Activated naive CD4-positive, alpha-beta T cell treated with anti-CD3 and anti-CD28 coated beads for 36 hours (primary cell): ENCODE measurements at regions of chr13 and their contacts with region 1.

Region 1: DNA sequence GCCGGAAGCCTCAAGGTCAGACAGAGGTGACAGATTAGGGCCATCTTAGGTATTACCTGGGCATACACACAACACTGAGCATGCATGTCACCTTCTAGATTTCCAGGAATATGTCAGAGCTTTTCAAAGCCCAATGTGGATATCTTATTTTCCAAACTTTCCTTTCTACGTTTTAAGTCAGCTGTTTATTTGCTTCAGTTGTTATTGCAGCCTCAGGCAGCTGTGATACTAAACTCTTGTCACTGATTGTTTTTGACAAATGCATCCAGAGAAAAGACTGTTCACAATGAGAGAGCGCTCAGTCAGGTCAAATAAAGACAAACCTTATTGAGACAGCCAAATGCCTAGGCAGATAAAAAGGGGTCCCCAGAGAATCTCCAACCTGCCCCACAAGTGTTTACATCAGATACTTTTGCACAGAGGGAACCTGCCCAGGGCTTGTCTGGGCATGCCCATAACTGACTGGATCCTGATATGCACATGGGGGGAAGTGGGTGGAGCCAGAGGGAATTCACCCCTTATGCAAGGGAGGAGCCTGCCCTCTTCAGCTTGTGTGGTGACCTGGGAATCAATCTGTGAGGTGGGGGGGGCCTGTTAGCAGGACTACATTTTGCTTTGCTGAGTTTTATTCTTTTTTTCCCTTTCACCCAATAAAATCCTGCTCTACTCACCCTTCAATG is 28.5 kb downstream of the MED4 start:
- DNase-seq: peak; percentile 90
- H3K4me3 Mint-ChIP-seq: no peak overlapping the region
- H3K27ac Mint-ChIP-seq: peak overlapping the region; percentile 91
- H3K4me1 Mint-ChIP-seq: peaks cover 13% of the 10 kb centered on the region
- H3K27me3 Mint-ChIP-seq: no peaks in the 10 kb centered on the region

Region 2: GRCh38 chr13:47890146-47890814 is 176.2 kb before region 1 on chr13:
- CTCF ChIA-PET with region 1: no interaction called
- intact Hi-C with region 1: loop called (anchors 1 kb)
- DNase-seq: peak; percentile 55
- H3K4me3 Mint-ChIP-seq: peak overlapping the region; percentile 70
- H3K27ac Mint-ChIP-seq: peak overlapping the region; percentile 80
- H3K4me1 Mint-ChIP-seq: peaks cover 15% of the 10 kb centered on the region
- H3K27me3 Mint-ChIP-seq: no peaks in the 10 kb centered on the region

Region 3: GRCh38 chr13:48000778-48001628 is 65.4 kb before region 1 on chr13 and contains the start of gene SUCLA2:
- CTCF ChIA-PET with region 1: no interaction called
- intact Hi-C with region 1: loop called (anchors 1 kb)
- DNase-seq: peak; percentile 92
- H3K4me3 Mint-ChIP-seq: peak within 1 kb of the TSS; percentile 94
- H3K27ac Mint-ChIP-seq: peak within 1 kb of the TSS; percentile 81
- H3K4me1 Mint-ChIP-seq: peaks cover 31% of the 10 kb centered on the region
- H3K27me3 Mint-ChIP-seq: no peaks in the 10 kb centered on the region
- total RNA-seq, gene SUCLA2: 44.0 to 44.4 TPM